ENCODE measurements at regions of chr11 and their contacts with region 1.

Region 1: DNA sequence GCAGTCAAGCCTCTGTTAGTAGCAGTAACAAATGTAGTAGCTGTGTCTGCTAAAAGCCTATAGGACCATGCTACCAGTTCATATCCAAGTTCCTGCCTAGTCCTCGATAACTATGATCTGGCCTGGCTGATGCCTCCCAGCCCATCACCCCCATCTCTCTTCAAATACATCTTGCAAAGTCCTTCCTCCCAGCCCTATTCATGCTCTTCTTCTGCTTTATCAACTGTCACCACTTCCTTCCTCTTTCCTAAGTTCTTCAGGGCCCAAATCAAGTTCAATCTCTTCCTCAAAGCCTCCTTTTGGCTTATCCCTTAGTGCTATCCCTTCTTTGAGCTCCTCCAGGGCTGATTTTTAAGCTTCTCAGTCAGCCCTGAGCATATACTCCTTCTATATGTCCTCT is 150.9 kb upstream of the THY1 start:
- DNase-seq: no peak
- ATAC-seq: no peak
- H3K4me3 ChIP-seq: no peak overlapping the region
- H3K4me3 Mint-ChIP-seq: no peak overlapping the region
- H3K27ac ChIP-seq: no peak overlapping the region
- H3K27ac Mint-ChIP-seq: no peak overlapping the region
- H3K4me1 ChIP-seq: no peaks in the 10 kb centered on the region
- H3K4me1 Mint-ChIP-seq: no peaks in the 10 kb centered on the region
- H3K27me3 ChIP-seq: peaks cover 0 to 25% of the 10 kb centered on the region in 2 experiments
- H3K27me3 Mint-ChIP-seq: peaks cover 15 to 25% of the 10 kb centered on the region in 2 donors

Region 2: GRCh38 chr11:119560291-119560690 is 13.6 kb before region 1 on chr11:
- CTCF ChIA-PET with region 1: no interaction called
- POLR2A ChIA-PET with region 1: no interaction called
- DNase-seq: no peak
- ATAC-seq: no peak
- H3K4me3 ChIP-seq: no peak overlapping the region
- H3K4me3 Mint-ChIP-seq: no peak overlapping the region
- H3K27ac ChIP-seq: no peak overlapping the region
- H3K27ac Mint-ChIP-seq: no peak overlapping the region
- H3K4me1 ChIP-seq: no peaks in the 10 kb centered on the region
- H3K4me1 Mint-ChIP-seq: no peaks in the 10 kb centered on the region
- H3K27me3 ChIP-seq: peaks cover 3 to 13% of the 10 kb centered on the region in 2 experiments
- H3K27me3 Mint-ChIP-seq: peaks cover 33 to 37% of the 10 kb centered on the region in 2 donors

Region 3: GRCh38 chr11:119727523-119728151 is 153.8 kb after region 1 on chr11:
- CTCF ChIA-PET with region 1: no interaction called
- POLR2A ChIA-PET with region 1: interaction called in 1 of 2 experiments, 10 read pairs
- DNase-seq: peak in 12 of 35 experiments; percentile 3 to 48 (median 22)
- ATAC-seq: no peak
- H3K4me3 ChIP-seq: peak overlapping the region; percentile 61 to 78
- H3K4me3 Mint-ChIP-seq: peak overlapping the region; percentile 79 to 93 (median 88)
- H3K27ac ChIP-seq: no peak overlapping the region
- H3K27ac Mint-ChIP-seq: no peak overlapping the region
- H3K4me1 ChIP-seq: peaks cover 11 to 28% of the 10 kb centered on the region in 2 experiments
- H3K4me1 Mint-ChIP-seq: peaks cover 5 to 22% (median 12%) of the 10 kb centered on the region in 3 donors
- H3K27me3 ChIP-seq: peaks cover 2 to 48% of the 10 kb centered on the region in 2 experiments
- H3K27me3 Mint-ChIP-seq: peaks cover 11 to 13% of the 10 kb centered on the region in 2 donors

Measured in T-cell (primary cell).